Activated CD4-positive, alpha-beta memory T cell treated with anti-CD3 and anti-CD28 coated beads for 36 hours (primary cell): ENCODE measurements at regions of chr6 and their contacts with region 1.

Region 1: DNA sequence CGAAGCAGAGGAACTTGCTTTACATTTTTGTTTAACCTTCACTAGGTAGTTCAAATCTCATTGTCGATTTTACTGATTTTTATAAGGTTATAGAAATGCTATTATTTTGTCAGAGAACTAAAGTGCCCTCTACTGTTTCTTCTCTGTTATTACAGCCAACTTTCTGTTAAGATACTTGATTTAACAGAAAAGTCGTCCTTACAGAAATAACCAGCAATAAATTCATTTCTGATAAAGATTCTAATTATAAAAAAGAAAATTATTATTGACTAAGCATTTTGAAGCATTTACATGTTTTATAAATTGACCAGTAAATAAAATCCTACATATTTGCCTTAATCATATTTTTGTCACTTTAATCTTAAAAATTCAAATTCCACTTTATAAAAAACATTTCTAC is 60.8 kb downstream of the OGFRL1 start:
- DNase-seq: no peak
- H3K4me3 Mint-ChIP-seq: no peak overlapping the region
- H3K27ac Mint-ChIP-seq: no peak overlapping the region
- H3K4me1 Mint-ChIP-seq: peaks cover 4% of the 10 kb centered on the region
- H3K27me3 Mint-ChIP-seq: peaks cover 4% of the 10 kb centered on the region

Region 2: GRCh38 chr6:71190809-71191208 is 158.6 kb before region 1 on chr6:
- CTCF ChIA-PET with region 1: interaction called, 25 read pairs
- POLR2A ChIA-PET with region 1: no interaction called
- intact Hi-C with region 1: loop called (anchors 1 kb)
- DNase-seq: no peak
- H3K4me3 Mint-ChIP-seq: no peak overlapping the region
- H3K27ac Mint-ChIP-seq: no peak overlapping the region
- H3K4me1 Mint-ChIP-seq: no peaks in the 10 kb centered on the region
- H3K27me3 Mint-ChIP-seq: no peaks in the 10 kb centered on the region

Region 3: DNA sequence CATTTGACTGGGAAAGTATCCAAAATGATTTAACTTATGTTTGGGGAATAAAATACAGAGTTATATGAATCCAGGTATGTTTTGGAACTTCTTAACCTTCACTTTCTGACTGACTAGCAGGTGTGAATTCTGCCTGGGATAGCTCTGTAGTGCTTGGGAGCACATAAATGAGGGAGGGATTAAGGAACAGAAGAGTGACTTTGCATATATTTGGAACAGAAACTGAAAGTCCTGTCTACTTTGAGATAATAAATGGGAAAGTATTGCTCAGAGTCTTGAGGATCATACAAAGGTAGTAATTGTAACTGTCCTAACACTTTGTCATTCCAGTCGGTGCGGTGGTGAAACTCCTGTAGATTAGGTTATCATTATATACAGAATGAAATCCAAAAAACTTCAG is 854.6 kb after region 1 on chr6:
- CTCF ChIA-PET with region 1: no interaction called
- POLR2A ChIA-PET with region 1: no interaction called
- intact Hi-C with region 1: no loop called
- DNase-seq: no peak
- H3K4me3 Mint-ChIP-seq: no peak overlapping the region
- H3K27ac Mint-ChIP-seq: no peak overlapping the region
- H3K4me1 Mint-ChIP-seq: no peaks in the 10 kb centered on the region
- H3K27me3 Mint-ChIP-seq: no peaks in the 10 kb centered on the region